PC-3 (cell line): ENCODE measurements at regions of chr2 and their contacts with region 1.

Region 1: DNA sequence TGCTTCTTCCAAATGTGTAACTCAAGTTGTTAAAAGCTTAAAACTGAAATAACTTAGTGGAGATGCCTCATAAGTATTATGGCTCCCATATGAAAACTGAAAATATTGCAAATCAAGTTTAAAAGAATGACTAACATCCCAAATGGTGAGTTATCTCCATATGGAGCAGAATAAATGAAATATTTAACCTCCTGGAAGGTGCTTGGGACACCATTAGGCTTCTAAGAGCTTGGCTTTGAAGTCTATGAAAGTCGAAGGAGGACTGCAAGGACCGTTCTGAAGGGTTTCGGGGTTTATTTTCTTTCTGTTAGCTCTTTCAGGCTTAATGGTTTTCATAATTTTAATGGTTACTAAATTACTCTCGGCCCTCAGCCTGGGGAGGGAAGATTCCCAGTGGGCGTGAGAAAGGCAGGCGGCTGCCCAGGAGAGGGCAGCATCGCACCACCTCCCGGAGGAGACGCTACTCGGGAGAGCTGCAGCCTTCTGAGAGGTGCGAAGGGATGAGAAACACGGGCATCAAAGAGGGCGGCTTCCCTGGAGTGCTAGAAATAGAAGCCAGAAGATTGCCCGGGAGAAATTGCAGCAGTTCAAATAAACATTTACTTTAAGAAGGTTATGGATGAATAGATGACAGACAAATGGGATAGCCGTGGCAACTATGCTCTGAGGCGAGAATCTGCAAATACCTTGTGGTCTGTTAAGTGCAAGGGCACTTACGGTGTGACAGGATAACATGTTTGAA is 43.1 kb downstream of the MAP3K19 start:
- DNase-seq: peak; percentile 84
- ATAC-seq: peak; percentile 100
- H3K4me3 ChIP-seq: no peak overlapping the region
- H3K27ac ChIP-seq: no peak overlapping the region
- H3K4me1 ChIP-seq: no peaks in the 10 kb centered on the region
- H3K27me3 ChIP-seq: no peaks in the 10 kb centered on the region
- CTCF ChIP-seq: peak; percentile 95

Region 2: GRCh38 chr2:135052042-135052876 is 48.1 kb after region 1 on chr2 and contains the start of gene RAB3GAP1:
- CTCF ChIA-PET with region 1: no interaction called
- POLR2A ChIA-PET with region 1: interaction called, 6 read pairs
- intact Hi-C with region 1: loop called (anchors 1 kb)
- DNase-seq: peak; percentile 82
- ATAC-seq: peak; percentile 94
- H3K4me3 ChIP-seq: peak within 1 kb of the TSS; percentile 92
- H3K27ac ChIP-seq: peak within 1 kb of the TSS; percentile 67
- H3K4me1 ChIP-seq: peaks cover 23% of the 10 kb centered on the region
- H3K27me3 ChIP-seq: no peaks in the 10 kb centered on the region
- CTCF ChIP-seq: 0 out of 2 replicates have a peak, but pooled peaks have one; percentile 12
- total RNA-seq, gene RAB3GAP1: 35.8 and 41.1 TPM in 2 replicates

Region 3: GRCh38 chr2:135113322-135113721 is 109.1 kb after region 1 on chr2:
- CTCF ChIA-PET with region 1: no interaction called
- POLR2A ChIA-PET with region 1: no interaction called
- intact Hi-C with region 1: no loop called
- DNase-seq: no peak
- ATAC-seq: no peak
- H3K4me3 ChIP-seq: no peak overlapping the region
- H3K27ac ChIP-seq: no peak overlapping the region
- H3K4me1 ChIP-seq: no peaks in the 10 kb centered on the region
- H3K27me3 ChIP-seq: no peaks in the 10 kb centered on the region
- CTCF ChIP-seq: no peak

Region 4: DNA sequence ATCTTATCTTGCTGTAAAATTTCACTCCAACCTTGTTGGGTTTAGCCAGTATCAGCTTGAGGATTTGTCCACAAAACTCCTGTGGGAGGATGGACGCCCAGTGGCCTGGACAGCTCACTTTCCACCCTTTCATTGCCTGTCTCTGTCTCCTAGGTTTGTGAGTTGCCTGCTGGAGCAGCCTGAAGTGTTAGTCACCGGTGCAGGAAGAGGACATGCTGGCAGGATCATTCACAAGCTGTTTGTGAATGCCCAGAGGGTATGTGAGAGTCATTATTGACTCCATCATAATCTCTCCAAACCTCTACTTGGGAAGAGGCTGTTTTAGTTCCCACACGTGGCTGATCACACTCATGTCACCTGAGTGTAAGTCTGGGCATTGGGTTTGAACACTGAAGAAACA is 160.3 kb after region 1 on chr2:
- CTCF ChIA-PET with region 1: no interaction called
- POLR2A ChIA-PET with region 1: no interaction called
- intact Hi-C with region 1: loop called (anchors 5 kb)
- DNase-seq: peak; percentile 96
- ATAC-seq: peak; percentile 97
- H3K4me3 ChIP-seq: no peak overlapping the region
- H3K27ac ChIP-seq: peak overlapping the region; percentile 88
- H3K4me1 ChIP-seq: peaks cover 36% of the 10 kb centered on the region
- H3K27me3 ChIP-seq: no peaks in the 10 kb centered on the region
- CTCF ChIP-seq: no peak

Region 5: GRCh38 chr2:135473567-135473966 is 469.4 kb after region 1 on chr2:
- CTCF ChIA-PET with region 1: no interaction called
- POLR2A ChIA-PET with region 1: no interaction called
- intact Hi-C with region 1: loop called (anchors 5 kb)
- DNase-seq: peak; percentile 56
- ATAC-seq: peak; percentile 68
- H3K4me3 ChIP-seq: no peak overlapping the region
- H3K27ac ChIP-seq: no peak overlapping the region
- H3K4me1 ChIP-seq: no peaks in the 10 kb centered on the region
- H3K27me3 ChIP-seq: no peaks in the 10 kb centered on the region
- CTCF ChIP-seq: peak; percentile 82

Region 6: DNA sequence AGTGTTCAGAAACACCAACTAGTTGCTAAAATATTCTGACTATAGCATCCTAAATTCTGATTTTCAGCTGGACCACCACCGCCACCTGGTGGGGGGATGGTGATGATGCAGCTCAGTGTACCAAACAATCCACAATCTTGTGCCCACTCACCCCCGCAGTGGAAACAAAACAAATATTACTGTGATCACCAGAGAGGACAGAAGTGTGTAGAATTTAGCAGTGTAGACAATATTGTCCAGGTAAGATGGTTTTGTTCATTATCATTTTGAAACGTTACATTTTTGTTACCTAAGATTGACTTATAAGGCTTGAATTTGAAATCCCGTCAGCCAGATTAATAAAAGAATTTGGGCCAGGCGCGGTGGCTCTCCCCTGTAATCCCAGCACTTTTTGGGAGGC is 705.8 kb after region 1 on chr2:
- CTCF ChIA-PET with region 1: interaction called, 3 read pairs
- POLR2A ChIA-PET with region 1: no interaction called
- intact Hi-C with region 1: loop called (anchors 2 kb)
- DNase-seq: peak; percentile 65
- ATAC-seq: peak; percentile 71
- H3K4me3 ChIP-seq: no peak overlapping the region
- H3K27ac ChIP-seq: no peak overlapping the region
- H3K4me1 ChIP-seq: no peaks in the 10 kb centered on the region
- H3K27me3 ChIP-seq: no peaks in the 10 kb centered on the region
- CTCF ChIP-seq: peak; percentile 95